ENCODE measurements at regions of chr11 and their contacts with region 1.

Region 1: DNA sequence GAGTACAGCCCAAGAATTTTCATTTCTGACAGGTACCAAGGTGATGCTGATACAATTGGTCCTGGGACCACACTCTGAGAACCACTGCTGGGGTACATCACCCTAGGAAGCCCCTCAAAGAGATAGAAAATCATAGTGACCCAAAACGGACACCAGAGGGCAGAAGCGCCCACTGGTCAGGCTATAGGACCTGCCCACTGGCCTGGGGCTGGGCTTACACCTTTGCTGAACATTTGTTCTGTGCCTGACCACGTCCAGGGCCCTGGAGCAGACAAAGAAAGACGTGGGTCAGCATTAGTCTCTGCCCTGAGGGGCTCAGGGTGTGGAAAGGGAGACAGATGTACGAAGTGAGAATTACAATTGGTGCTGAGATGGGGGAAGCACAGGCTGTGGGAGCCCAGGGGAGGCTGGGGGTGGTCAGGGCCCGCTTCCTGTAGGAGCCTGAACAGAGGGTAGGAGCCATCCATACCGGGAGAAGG is 14.4 kb upstream of the SERPINH1 start:
- DNase-seq: peak; percentile 71
- H3K4me3 Mint-ChIP-seq: no peak overlapping the region
- H3K27ac Mint-ChIP-seq: no peak overlapping the region
- H3K4me1 Mint-ChIP-seq: peaks cover 5% of the 10 kb centered on the region
- H3K27me3 Mint-ChIP-seq: no peaks in the 10 kb centered on the region
- CTCF ChIP-seq: peak; percentile 84

Region 2: GRCh38 chr11:75562048-75562835 is 14.6 kb after region 1 on chr11 and contains the start of gene SERPINH1:
- CTCF ChIA-PET with region 1: interaction called, 6 read pairs
- POLR2A ChIA-PET with region 1: interaction called, 5 read pairs
- intact Hi-C with region 1: loop called (anchors 1 kb)
- DNase-seq: peak; percentile 83
- H3K4me3 Mint-ChIP-seq: peak within 1 kb of the TSS; percentile 92
- H3K27ac Mint-ChIP-seq: peak within 1 kb of the TSS; percentile 94
- H3K4me1 Mint-ChIP-seq: peaks cover 41% of the 10 kb centered on the region
- H3K27me3 Mint-ChIP-seq: no peaks in the 10 kb centered on the region
- CTCF ChIP-seq: no peak
- total RNA-seq, gene SERPINH1: 80.5 TPM in 2 replicates

Region 3: GRCh38 chr11:75577207-75577606 is 29.6 kb after region 1 on chr11:
- CTCF ChIA-PET with region 1: interaction called, 6 read pairs
- POLR2A ChIA-PET with region 1: no interaction called
- intact Hi-C with region 1: loop called (anchors 1 kb)
- DNase-seq: peak; percentile 30
- H3K4me3 Mint-ChIP-seq: no peak overlapping the region
- H3K27ac Mint-ChIP-seq: no peak overlapping the region
- H3K4me1 Mint-ChIP-seq: peaks cover 6% of the 10 kb centered on the region
- H3K27me3 Mint-ChIP-seq: peaks cover 12% of the 10 kb centered on the region
- CTCF ChIP-seq: peak; percentile 51

Region 4: DNA sequence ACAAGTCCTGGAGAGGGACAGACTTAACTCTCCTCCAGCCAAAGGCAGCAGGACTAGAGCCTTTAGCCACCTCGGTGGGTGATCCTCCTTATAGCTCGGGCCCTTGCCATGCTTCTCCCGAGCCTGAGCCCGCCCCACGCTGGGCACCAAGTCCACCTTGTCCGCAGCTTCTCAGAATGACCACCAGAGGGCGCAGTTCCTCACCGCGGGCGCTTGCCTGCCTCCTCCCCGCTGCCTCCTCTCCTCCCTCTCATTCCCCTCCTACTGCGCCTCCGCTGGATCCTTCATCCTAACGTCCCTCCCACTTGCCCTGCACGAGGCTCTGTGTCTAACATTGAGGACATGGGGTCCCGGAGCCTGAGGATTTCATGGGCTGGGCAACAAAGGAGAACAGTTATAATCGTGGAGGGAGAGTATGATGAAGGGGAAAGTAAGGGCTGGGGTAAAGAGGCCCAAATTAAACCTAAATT is 158.7 kb after region 1 on chr11:
- CTCF ChIA-PET with region 1: no interaction called
- POLR2A ChIA-PET with region 1: interaction called, 3 read pairs
- intact Hi-C with region 1: loop called (anchors 5 kb)
- DNase-seq: peak; percentile 82
- H3K4me3 Mint-ChIP-seq: no peak overlapping the region
- H3K27ac Mint-ChIP-seq: no peak overlapping the region
- H3K4me1 Mint-ChIP-seq: peaks cover 13% of the 10 kb centered on the region
- H3K27me3 Mint-ChIP-seq: no peaks in the 10 kb centered on the region
- CTCF ChIP-seq: peak; percentile 91

Measured in MCF 10A (cell line).